ENCODE measurements at regions of chr4 and their contacts with region 1.

Region 1: DNA sequence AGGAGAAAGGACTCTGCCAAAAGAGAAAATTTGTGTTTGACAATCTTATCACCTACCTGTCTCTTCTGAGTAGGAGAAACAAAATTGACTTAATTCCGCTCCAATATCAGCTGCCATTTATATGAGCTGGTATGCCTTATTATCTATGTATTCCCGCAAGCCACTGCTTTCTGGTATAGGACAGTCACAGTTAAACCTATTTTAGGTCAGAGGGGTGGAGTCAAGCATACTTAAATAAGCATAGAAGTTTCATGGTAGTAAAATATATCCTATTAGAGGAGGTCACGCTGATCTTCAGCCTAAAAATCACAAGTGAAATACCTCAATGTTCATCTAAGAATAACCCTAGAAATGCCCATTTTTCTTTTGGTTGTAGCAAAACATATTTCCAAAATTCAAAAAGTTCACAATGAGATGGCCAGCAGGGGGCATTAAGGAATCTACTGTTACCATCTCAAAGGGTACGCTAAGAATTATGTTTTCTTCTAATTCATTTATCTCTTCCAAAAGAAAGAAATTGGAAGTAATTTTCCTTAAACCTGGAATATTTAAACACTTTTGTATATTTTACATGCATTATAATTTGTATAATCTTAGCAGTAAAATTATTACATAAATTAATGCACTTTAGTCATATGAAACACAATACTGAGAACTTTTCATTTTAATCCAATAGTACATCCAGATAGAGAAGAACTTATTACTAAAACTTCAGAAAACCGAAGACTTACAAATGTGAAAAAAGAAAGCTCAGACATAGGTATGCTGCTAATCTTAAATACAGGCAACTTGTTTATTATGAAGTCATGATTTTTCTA is 10.5 kb downstream of the PPAT start:
- DNase-seq: peak in 1 of 2 donors; percentile 42
- ATAC-seq: no peak

Region 2: DNA sequence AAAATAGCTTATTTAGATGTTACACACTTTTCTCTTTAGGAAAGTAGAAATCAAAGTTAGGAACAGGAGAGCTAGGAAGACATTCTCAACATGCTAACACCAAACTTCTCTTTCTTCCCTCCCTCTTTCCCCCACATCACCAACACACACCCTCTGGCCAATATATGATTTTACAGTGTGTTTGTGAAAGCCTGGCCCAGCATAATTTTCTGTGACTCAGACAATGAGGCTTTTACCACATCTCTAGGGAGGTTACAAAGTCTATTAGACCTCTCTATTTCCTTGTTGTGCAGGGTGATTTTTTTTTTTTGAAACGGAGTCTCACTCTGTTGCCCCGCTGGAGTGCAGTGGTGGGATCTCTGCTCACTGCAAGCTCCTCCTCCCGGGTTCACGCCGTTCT is 227.5 kb before region 1 on chr4:
- intact Hi-C with region 1: no loop called
- DNase-seq: peak in 1 of 2 donors; percentile 39
- ATAC-seq: peak; percentile 100

Region 3: DNA sequence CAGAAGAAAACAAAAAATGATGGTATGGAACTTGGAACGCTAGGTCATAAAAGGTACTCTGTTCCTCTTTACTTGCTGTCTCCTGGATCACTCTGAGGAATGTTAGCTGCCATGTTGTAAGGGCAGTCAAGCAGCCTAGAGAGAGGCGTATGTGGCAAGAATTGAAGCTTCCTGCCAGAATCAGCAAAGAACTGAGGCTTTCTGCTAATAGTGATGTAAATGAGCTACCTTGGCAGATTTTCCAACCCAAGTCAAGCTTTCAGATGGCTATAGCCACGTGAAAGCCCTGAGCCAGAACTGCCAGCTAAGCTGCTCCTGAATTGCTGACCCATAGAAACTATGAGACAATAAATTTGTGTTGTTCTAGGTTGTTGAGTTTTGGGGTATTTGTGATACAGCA is 76.3 kb before region 1 on chr4:
- intact Hi-C with region 1: no loop called
- DNase-seq: no peak
- ATAC-seq: no peak

Region 4: GRCh38 chr4:56544573-56545131 is 119.7 kb after region 1 on chr4:
- intact Hi-C with region 1: loop called in 1 of 2 experiments (anchors 10 kb)
- DNase-seq: peak; percentile 62 to 88
- ATAC-seq: peak; percentile 100

Region 5: GRCh38 chr4:56641494-56642051 is 216.7 kb after region 1 on chr4:
- intact Hi-C with region 1: no loop called
- DNase-seq: no peak
- ATAC-seq: no peak

Measured in left colon (tissue), 2 donors.